Activated B cell treated with CpG ODN at 0.5 μM for 24 hours (primary cell): ENCODE measurements at regions of chr2 and their contacts with region 1.

Region 1: DNA sequence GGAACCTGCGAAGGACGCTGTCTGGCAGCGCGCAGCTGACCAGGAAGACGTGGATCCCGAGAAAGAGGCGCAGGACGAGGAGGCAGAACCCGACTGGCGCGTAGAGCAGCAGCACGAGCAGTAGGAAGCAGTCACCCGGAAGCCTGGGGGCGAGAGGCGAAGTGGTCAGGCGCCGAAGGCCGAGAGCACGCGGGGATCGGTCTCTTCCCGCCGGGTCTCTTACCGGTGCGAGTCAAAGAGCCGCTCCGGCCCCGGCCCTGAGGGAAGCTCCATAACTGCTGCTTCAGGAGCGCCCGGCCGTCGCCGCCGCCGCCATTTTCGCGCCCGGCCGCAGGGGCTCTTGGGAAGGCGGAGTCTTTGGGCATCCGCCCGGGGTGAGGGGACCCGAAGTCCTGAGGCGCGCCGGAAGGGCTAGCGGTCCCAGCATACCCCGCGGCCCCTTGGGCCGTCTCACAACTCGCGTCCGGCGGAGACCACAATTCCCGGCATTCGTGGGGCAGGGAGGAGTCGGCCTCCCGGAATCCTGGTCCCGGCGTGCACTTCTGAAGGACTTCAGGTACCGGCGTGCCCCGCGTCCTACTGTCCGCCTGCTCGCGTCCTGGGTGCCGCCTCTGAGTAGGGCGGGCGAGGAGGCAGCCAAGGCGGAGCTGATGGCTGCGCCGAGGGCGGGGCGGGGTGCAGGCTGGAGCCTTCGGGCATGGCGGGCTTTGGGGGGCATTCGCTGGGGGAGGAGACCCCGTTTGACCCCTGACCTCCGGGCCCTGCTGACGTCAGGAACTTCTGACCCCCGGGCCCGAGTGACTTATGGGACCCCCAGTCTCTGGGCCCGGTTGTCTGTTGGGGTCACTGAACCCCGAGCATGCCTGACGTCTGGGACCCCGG is at the starts of genes AUP1 and HTRA2:
- DNase-seq: peak; percentile 87
- ATAC-seq: peak; percentile 83
- H3K4me3 Mint-ChIP-seq: peak within 1 kb of the TSS; percentile 97
- H3K27ac Mint-ChIP-seq: peak within 1 kb of the TSS; percentile 96
- H3K4me1 Mint-ChIP-seq: peaks cover 55% of the 10 kb centered on the region
- H3K27me3 Mint-ChIP-seq: no peaks in the 10 kb centered on the region
- CTCF ChIP-seq: no peak
- total RNA-seq, gene AUP1: 167 and 177 TPM in 2 replicates
- total RNA-seq, gene HTRA2: 49.4 and 53.1 TPM in 2 replicates

Region 2: GRCh38 chr2:73736855-73737779 is 792.5 kb before region 1 on chr2 and contains the start of gene TPRKB:
- CTCF ChIA-PET with region 1: no interaction called
- POLR2A ChIA-PET with region 1: no interaction called
- intact Hi-C with region 1: loop called (anchors 1 kb)
- DNase-seq: peak; percentile 85
- ATAC-seq: peak; percentile 98
- H3K4me3 Mint-ChIP-seq: peak within 1 kb of the TSS; percentile 94
- H3K27ac Mint-ChIP-seq: peak within 1 kb of the TSS; percentile 90
- H3K4me1 Mint-ChIP-seq: peaks cover 18% of the 10 kb centered on the region
- H3K27me3 Mint-ChIP-seq: no peaks in the 10 kb centered on the region
- CTCF ChIP-seq: no peak
- total RNA-seq, gene TPRKB: 26.9 and 27.1 TPM in 2 replicates

Region 3: DNA sequence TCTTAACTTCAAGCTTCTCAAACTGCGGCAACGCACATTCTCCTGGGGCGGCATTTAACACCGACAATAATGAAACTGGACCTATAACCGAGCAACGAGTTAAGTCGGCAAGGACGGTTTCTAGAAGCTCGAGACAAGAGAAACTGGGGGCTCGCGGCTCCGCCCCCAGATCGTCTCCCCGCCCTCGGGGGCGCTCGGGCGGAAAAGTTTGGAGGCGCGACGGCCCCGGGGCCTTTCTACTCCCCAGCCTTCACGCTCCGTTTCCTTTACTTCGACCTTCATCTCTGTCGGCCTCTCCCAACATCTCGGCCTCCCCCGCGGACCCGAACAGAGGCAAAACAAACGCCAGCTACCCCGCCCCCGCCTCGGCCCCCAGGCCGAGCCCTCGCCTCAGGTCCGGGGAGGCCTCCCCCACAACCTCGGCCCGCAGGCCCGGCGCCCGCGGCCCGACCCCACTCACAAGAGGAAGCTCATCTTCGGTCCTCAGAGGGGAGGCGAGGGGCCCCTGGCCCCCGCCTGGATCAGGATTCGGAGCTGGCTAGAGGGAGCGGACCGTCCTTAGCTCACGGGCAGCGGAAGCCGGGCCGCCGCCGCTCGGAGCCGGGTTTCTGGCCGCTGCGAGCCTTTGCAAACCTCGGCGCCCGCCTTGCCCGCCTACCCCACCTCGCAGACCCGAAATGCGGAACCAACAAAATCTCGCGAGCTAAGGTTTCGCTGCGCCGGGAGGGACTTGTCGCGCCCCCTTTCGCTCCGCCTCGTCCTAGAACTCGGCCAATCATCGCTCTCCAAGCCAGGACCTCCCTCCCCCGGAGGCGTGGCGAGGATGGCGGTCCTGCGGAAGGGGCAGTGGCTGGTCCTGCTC is 351.2 kb before region 1 on chr2 and contains the start of gene MOB1A:
- CTCF ChIA-PET with region 1: no interaction called
- POLR2A ChIA-PET with region 1: interaction called, 7 read pairs
- intact Hi-C with region 1: loop called (anchors 1 kb)
- DNase-seq: peak; percentile 93
- ATAC-seq: peak; percentile 83
- H3K4me3 Mint-ChIP-seq: peak within 1 kb of the TSS; percentile 93
- H3K27ac Mint-ChIP-seq: peak within 1 kb of the TSS; percentile 98
- H3K4me1 Mint-ChIP-seq: peaks cover 60% of the 10 kb centered on the region
- H3K27me3 Mint-ChIP-seq: no peaks in the 10 kb centered on the region
- CTCF ChIP-seq: no peak
- total RNA-seq, gene MOB1A: 314 and 318 TPM in 2 replicates

Region 4: DNA sequence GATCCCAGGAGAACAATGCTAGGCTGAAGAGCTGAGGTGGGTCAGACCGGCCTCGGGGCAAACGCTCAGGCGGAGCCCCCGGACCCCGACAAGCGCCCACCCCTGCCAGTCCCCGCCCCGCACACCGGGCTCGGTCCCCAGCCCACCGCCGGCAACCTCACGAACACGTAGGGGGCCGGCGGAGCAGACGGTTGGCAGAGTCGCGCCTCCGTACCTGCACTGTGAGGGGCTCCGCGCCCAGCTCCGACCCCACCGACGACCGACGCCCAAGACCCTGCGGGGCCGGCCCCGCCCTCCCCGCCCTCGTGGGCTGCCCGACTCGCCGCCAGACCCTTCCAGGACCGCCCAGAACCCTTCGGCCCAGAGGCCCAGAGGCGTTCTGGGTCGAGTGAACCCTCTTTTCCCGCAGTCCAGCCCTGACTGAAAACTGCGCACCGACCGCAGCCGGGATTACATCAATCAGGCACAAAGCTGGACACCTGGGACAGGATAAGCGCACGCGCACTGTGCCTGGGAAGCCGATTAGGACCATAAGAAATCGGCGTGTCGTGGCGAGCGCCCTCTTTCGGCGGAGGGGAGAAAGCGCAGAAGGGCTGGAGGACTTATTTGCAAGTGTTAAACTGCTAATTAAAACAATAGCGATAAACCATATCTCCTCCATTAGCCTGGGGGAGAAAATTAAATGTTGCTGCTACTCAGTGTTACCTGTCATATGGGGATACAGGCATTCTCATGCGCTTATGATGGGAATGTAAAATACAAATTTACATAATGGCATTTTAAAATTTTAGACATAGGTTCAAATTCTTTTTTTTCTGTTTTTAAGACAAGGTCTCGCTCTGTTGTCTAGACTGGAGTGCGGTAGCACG is 137.8 kb before region 1 on chr2:
- CTCF ChIA-PET with region 1: no interaction called
- POLR2A ChIA-PET with region 1: interaction called, 5 read pairs
- intact Hi-C with region 1: loop called (anchors 1 kb)
- DNase-seq: peak; percentile 94
- ATAC-seq: peak; percentile 89
- H3K4me3 Mint-ChIP-seq: peak overlapping the region; percentile 96
- H3K27ac Mint-ChIP-seq: peak overlapping the region; percentile 99
- H3K4me1 Mint-ChIP-seq: peaks cover 6% of the 10 kb centered on the region
- H3K27me3 Mint-ChIP-seq: peaks cover 4% of the 10 kb centered on the region
- CTCF ChIP-seq: peak; percentile 93

Region 5: GRCh38 chr2:74482801-74483674 is 46.6 kb before region 1 on chr2 and contains the starts of genes CCDC142 and TTC31:
- CTCF ChIA-PET with region 1: interaction called, 22 read pairs
- POLR2A ChIA-PET with region 1: interaction called, 63 read pairs
- intact Hi-C with region 1: loop called (anchors 1 kb)
- DNase-seq: peak; percentile 83
- ATAC-seq: peak; percentile 92
- H3K4me3 Mint-ChIP-seq: peak within 1 kb of the TSS; percentile 100
- H3K27ac Mint-ChIP-seq: peak within 1 kb of the TSS; percentile 100
- H3K4me1 Mint-ChIP-seq: peaks cover 30% of the 10 kb centered on the region
- H3K27me3 Mint-ChIP-seq: no peaks in the 10 kb centered on the region
- CTCF ChIP-seq: peak; percentile 23
- total RNA-seq, gene CCDC142: 29.3 and 40.4 TPM in 2 replicates
- total RNA-seq, gene TTC31: 41.9 and 49.1 TPM in 2 replicates

Region 6: DNA sequence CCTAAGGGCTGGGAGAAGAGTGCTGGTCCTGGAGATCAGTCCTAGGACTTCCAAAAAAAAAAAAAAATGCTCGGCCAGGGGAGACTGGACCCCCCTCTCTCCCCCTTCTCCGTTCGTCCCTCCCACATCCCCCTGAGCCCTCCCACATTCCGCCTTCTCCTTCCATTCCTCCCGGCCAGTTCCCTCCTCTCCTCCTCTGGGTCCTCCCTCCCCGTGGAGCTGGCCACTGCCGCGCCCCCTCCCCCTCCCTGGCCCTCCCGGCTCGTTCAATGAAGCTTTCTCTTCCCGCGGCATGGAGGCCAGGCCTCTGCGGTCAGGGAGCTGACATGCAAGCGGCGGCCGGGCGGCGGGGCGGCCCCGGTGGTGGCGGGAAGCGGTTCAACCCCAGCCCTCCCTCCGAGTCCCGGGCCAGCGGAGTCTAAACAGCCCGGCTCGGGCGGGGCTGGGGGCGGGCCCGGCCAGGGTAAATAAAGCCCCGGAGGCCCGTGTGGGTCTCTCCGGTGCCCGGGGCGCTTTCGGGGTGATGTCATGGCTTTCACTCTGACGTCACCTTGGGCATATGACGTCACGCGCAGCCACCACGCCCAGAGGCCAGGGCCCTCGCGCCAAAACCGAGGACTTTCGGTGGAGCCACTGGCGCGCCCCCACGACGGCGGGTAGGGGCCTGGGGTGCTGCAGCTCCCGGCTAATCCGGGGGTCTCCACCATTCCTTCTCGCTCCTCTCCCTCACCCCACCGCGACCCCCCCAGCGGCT is 24.5 kb after region 1 on chr2 and contains the start of gene LOXL3:
- CTCF ChIA-PET with region 1: no interaction called
- POLR2A ChIA-PET with region 1: interaction called, 8 read pairs
- intact Hi-C with region 1: loop called (anchors 1 kb)
- DNase-seq: peak; percentile 83
- ATAC-seq: peak; percentile 51
- H3K4me3 Mint-ChIP-seq: peak within 1 kb of the TSS; percentile 97
- H3K27ac Mint-ChIP-seq: peak within 1 kb of the TSS; percentile 90
- H3K4me1 Mint-ChIP-seq: peaks cover 32% of the 10 kb centered on the region
- H3K27me3 Mint-ChIP-seq: peaks cover 7% of the 10 kb centered on the region
- CTCF ChIP-seq: no peak
- total RNA-seq, gene LOXL3: 1.4 and 2.3 TPM in 2 replicates

Region 7: DNA sequence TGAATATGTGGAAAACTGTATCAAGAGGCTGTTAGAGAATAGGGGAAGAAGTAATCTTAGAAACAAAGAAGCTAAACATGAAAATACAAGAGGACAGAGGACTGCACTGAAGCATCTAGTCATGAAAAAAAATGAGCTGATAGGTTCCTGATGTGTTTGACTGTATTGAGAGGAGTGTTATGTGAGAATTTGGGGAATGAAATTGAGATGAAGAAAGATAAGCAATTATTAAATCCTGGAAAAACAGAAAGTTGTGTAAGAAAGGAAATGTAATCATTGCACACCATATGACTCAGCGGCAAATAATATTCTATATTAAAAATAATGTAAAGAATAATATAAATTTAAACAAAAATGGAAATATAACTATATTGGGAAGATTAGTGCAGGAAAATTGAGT is 195.7 kb after region 1 on chr2:
- CTCF ChIA-PET with region 1: no interaction called
- POLR2A ChIA-PET with region 1: no interaction called
- intact Hi-C with region 1: no loop called
- DNase-seq: no peak
- ATAC-seq: no peak
- H3K4me3 Mint-ChIP-seq: no peak overlapping the region
- H3K27ac Mint-ChIP-seq: no peak overlapping the region
- H3K4me1 Mint-ChIP-seq: no peaks in the 10 kb centered on the region
- H3K27me3 Mint-ChIP-seq: peaks cover 22% of the 10 kb centered on the region
- CTCF ChIP-seq: no peak

Region 8: GRCh38 chr2:74778381-74779264 is 249.0 kb after region 1 on chr2:
- CTCF ChIA-PET with region 1: no interaction called
- POLR2A ChIA-PET with region 1: no interaction called
- intact Hi-C with region 1: no loop called
- DNase-seq: no peak
- ATAC-seq: no peak
- H3K4me3 Mint-ChIP-seq: no peak overlapping the region
- H3K27ac Mint-ChIP-seq: no peak overlapping the region
- H3K4me1 Mint-ChIP-seq: peaks cover 12% of the 10 kb centered on the region
- H3K27me3 Mint-ChIP-seq: no peaks in the 10 kb centered on the region
- CTCF ChIP-seq: no peak